Heart left ventricle (tissue), 16 donors: ENCODE measurements at regions of chr15 and their contacts with region 1.

Region 1: DNA sequence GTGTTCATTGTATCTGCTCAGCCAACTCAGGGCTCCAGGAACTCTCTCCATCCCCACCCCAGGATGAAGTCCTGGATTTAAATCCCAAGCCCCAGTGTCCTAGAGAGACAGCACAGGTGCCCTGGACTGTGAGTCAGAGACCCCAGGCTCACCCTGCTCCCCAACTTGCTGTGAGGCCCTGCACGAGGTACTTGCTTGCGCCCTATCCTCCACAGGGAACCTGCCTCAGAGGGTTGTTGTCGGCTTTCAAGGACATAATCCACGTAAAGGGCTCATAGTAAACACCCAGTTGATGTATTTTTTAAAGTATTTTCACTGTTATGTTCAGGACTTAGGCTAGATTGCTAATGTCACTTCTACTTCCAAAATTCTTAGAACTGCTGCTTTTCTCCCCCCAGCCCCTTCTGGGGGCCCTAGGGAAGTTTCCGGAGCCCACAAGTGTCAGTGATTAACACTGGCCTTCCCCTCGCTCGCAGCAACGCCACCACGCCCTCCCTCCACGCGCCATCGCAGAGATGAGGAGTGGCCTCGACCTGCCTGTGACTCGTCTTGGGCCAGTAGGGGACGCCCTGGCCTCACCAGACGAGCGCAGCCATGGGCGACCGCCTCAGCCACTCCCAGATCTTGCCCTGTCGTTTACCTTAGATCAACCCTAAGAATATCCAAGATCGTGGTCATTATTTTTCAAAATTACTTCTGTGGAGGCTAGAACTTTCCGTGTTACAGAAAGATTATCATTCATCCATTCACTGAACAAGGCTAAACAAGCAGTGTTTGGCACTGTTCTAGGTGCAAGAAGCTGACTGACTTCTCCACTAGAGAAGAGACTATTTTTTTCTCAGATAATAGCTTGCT is 6.0 kb upstream of the SRP14 start:
- DNase-seq: peak; percentile 87 to 94 (median 91)
- ATAC-seq: peak; percentile 88 to 94 (median 92)
- H3K4me3 ChIP-seq: peak overlapping the region in 7 of 12 donors; percentile 7 to 43 (median 18)
- H3K27ac ChIP-seq: peak overlapping the region in 10 of 12 donors; percentile 5 to 61 (median 50)
- H3K4me1 ChIP-seq: peaks cover 6 to 67% (median 51%) of the 10 kb centered on the region in 12 donors
- H3K27me3 ChIP-seq: no peaks in the 10 kb centered on the region
- CTCF ChIP-seq: peak; percentile 77 to 99 (median 94)
- POLR2A ChIP-seq: peak in 1 of 2 donors; percentile 39

Region 2: DNA sequence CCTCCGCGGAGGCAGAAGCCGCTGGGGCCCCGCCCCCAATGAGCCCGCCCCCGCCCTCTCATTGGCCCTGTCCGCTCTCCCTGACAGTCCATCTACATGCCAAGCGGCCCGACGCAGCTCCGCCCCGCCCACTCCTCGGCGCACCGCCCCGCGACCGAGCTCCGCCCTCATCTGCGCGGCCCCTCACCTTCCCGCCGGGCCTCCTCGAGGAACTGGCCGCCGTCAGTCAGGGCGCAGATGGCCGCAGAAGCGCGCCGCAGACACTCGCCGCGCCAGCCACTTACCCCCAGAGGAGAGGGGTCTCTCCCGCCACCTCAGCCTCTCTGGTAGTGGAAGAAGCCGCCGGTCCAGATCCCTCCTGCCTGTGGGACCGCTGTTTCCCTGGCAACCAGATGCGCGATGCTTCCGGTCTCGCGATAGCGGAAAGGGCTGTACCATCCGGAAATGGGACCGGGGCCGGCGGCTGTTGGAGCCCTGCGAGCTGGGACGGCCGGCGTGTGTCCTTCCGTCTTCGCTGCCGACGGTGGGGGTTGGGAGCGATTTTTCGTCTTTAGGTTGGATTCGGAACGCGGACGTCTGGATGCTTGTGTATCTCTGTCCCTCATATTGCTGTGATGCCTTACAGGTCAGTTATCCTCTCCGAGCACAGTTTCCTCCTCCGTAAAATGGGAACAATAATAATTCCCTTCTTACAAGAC is 262.4 kb before region 1 on chr15 and contains the start of gene FSIP1:
- intact Hi-C with region 1: loop called in 1 of 10 experiments (anchors 10 kb)
- DNase-seq: peak; percentile 96 to 98 (median 97)
- ATAC-seq: peak; percentile 98 to 100 (median 100)
- H3K4me3 ChIP-seq: peak within 1 kb of the TSS; percentile 61 to 88 (median 72)
- H3K27ac ChIP-seq: peak within 1 kb of the TSS in 11 of 12 donors; percentile 62 to 86 (median 73)
- H3K4me1 ChIP-seq: peaks cover 0 to 35% (median 17%) of the 10 kb centered on the region in 12 donors
- H3K27me3 ChIP-seq: no peaks in the 10 kb centered on the region
- CTCF ChIP-seq: no peak
- POLR2A ChIP-seq: no peak
- total RNA-seq, gene FSIP1: 0.28 to 3.7 (median 1.5) TPM in 8 of 9 donors, not detected in the other

Region 3: DNA sequence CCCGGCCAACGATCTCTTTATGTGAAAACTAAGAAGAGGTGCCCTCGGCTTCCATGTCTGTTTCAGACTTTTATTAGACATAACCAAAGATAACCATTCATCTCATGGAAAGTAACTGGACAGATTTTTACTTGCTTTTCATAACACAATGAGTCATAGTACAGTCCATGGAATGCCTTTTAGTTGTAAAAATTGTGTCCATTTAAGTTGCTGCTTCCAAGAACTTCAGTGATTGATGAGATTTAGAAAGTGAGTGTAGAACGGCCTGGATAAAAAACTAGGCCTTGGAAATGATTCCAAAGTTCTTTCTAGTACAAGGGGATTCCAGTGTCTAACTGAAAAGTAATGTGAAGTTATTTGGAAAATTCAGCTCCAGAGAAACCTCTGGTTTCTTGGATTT is 100.2 kb before region 1 on chr15:
- intact Hi-C with region 1: no loop called
- DNase-seq: no peak
- ATAC-seq: no peak
- H3K4me3 ChIP-seq: no peak overlapping the region
- H3K27ac ChIP-seq: no peak overlapping the region
- H3K4me1 ChIP-seq: peaks cover 0 to 9% (median under 1%) of the 10 kb centered on the region in 12 donors
- H3K27me3 ChIP-seq: no peaks in the 10 kb centered on the region
- CTCF ChIP-seq: no peak
- POLR2A ChIP-seq: no peak

Region 4: DNA sequence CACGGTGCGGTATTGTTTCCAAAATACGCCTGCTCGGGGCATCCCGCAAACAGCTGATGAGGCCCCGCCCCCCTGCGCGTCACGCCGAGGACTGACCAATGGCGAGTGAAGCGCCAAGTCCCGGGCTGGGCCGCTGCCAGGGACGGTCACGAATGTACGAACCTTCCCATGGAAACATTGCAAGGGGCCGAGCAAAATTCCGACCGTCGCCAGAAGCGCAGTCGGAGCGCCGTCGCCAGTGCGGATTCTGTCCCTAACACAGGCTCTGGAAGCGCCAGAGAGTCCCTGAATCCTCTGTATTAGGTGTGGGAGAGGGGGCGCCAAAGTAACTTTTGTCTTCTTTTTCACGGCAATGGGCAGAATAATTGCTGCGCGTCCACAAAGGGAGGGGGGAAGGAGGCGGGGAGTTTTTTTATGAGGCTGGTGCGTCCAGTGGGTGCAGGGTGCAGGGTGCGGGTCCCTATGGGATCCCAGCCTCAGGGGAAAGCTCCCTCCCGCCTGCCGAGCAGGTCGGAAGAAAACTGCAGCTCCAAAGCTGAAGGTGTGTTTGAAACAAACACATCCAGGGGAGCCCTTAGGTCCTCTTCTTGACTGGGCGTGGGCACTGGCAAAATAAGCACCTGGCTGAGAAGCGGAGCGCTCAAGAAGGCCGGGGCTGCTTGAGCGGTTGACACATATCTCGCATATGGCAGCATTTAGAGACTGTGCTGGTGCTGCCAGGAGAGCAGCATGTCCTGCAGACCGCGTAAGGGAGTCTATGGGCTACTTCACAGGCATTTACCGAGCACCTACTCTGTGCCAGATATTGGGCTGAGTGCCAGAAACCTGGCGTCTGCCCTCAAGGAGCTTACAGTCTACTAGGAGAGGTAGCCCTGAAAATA is 64.2 kb after region 1 on chr15 and contains the start of gene BMF:
- intact Hi-C with region 1: loop called in 8 of 10 experiments (anchors 1 to 10 kb)
- DNase-seq: peak; percentile 100
- ATAC-seq: peak; percentile 87 to 93 (median 90)
- H3K4me3 ChIP-seq: peak within 1 kb of the TSS; percentile 60 to 98 (median 80)
- H3K27ac ChIP-seq: peak within 1 kb of the TSS; percentile 26 to 90 (median 77)
- H3K4me1 ChIP-seq: peaks cover 0 to 43% (median 32%) of the 10 kb centered on the region in 12 donors
- H3K27me3 ChIP-seq: peaks cover 0 to 4% (median 0%) of the 10 kb centered on the region in 9 donors
- CTCF ChIP-seq: peak in 7 of 12 donors; percentile 11 to 54 (median 32)
- POLR2A ChIP-seq: peak in 1 of 2 donors; percentile 20
- total RNA-seq, gene BMF: 1.2 to 12.9 (median 3.5) TPM

Region 5: GRCh38 chr15:40217159-40217824 is 172.3 kb after region 1 on chr15:
- intact Hi-C with region 1: loop called (anchors 1 to 5 kb)
- DNase-seq: peak in 2 of 5 donors; percentile 39 to 52
- ATAC-seq: peak; percentile 78 to 87 (median 84)
- H3K4me3 ChIP-seq: no peak overlapping the region
- H3K27ac ChIP-seq: no peak overlapping the region
- H3K4me1 ChIP-seq: no peaks in the 10 kb centered on the region
- H3K27me3 ChIP-seq: no peaks in the 10 kb centered on the region
- CTCF ChIP-seq: peak; percentile 73 to 91 (median 87)
- POLR2A ChIP-seq: no peak

Region 6: DNA sequence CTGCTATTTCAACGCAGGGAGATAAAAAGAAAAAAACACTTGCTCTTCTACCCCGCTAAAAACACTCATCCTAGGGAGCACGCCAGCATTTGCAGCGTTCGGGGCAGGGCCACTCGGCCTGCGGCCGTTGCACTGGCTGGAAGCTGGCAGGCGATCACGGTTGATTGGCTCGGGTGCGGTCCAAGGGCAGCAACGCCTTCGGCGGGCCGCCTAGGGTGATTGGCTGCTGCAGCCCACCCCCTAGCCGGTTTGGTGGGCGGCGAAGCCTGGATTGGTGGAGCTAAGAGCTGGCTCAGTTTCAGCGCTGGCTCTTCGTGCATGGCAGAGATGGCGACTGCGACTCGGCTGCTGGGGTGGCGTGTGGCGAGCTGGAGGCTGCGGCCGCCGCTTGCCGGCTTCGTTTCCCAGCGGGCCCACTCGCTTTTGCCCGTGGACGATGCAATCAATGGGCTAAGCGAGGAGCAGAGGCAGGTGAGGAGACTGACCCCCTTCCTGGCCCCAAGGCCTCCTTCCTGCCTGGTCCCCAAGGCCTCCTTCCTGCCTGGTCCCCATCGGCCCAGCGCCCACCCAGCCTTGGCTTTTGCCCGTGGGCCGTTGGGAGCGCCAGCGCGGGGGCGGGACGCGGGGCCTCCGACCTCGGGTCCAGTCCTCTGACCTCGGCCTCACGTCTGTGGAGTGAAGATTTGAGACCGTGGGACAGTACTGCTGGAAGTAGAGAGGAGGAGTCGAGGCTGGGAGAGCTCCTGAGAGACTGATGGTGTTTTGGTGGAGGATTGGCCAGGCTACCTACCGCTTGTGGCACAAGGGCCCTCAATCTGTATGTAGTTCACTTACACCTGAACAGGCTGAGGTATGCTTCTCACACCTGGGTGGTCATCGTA is 360.8 kb after region 1 on chr15 and contains the start of gene IVD:
- intact Hi-C with region 1: loop called in 1 of 10 experiments (anchors 10 kb)
- DNase-seq: peak; percentile 96 to 98 (median 98)
- ATAC-seq: peak; percentile 100
- H3K4me3 ChIP-seq: peak within 1 kb of the TSS; percentile 52 to 95 (median 74)
- H3K27ac ChIP-seq: peak within 1 kb of the TSS in 11 of 12 donors; percentile 57 to 85 (median 77)
- H3K4me1 ChIP-seq: peaks cover 0 to 31% (median 17%) of the 10 kb centered on the region in 12 donors
- H3K27me3 ChIP-seq: no peaks in the 10 kb centered on the region
- CTCF ChIP-seq: peak in 1 of 12 donors; percentile 6
- POLR2A ChIP-seq: peak in 1 of 2 donors; percentile 81
- total RNA-seq, gene IVD: 72.1 to 130 (median 99.8) TPM

Region 7: DNA sequence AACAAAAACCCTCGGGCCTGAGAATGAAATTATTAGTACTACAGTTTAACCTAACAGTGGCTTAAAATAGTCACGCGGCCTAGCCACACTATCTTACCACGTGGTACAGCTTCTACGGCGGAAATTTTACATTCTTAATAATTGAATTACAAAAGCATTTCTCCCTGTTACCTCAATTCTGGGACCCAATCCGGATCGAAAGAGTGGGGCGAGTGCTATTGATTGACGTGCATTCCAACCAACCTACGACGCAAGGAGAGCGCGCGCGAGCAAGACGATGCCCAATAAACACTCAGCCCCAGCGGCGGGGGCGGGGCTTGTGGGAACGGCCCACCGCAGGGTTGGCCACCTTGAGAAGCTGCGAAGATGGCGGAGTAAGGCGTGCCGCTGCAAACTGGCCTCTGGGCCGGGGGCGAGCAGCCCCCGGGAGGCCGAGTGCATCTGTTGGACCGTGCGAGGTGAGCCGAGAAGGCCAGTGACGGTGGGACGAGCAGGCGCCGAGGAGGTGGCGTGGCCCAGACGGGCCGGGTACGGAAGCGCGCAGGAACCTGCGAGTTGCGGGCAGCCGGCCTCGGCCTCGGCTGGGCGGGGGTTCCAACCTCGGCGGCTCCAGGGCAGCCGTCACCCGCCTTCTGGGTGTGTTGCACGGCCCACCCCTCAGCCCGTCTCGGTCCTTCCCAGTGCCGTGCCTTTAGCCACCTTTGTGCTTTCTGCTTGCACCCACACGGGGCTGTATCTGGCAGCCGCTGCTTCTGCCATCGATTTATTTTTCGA is 1238.9 kb after region 1 on chr15:
- intact Hi-C with region 1: loop called in 1 of 10 experiments (anchors 10 kb)
- DNase-seq: peak; percentile 98 to 99 (median 99)
- ATAC-seq: peak; percentile 99 to 100 (median 100)
- H3K4me3 ChIP-seq: peak overlapping the region; percentile 52 to 99 (median 87)
- H3K27ac ChIP-seq: peak overlapping the region; percentile 83 to 99 (median 94)
- H3K4me1 ChIP-seq: peaks cover 3 to 47% (median 29%) of the 10 kb centered on the region in 12 donors
- H3K27me3 ChIP-seq: no peaks in the 10 kb centered on the region
- CTCF ChIP-seq: no peak
- POLR2A ChIP-seq: peak; percentile 64 to 94